Prostate gland (tissue), 2 donors: ENCODE measurements at regions of chr14 and their contacts with region 1.

Region 1: GRCh38 chr14:42994051-42994736 is 1387.5 kb downstream of the LRFN5 start:
- DNase-seq: no peak
- H3K4me3 ChIP-seq: no peak overlapping the region
- H3K27ac ChIP-seq: no peak overlapping the region
- H3K4me1 ChIP-seq: no peaks in the 10 kb centered on the region
- H3K27me3 ChIP-seq: no peaks in the 10 kb centered on the region
- CTCF ChIP-seq: no peak
- POLR2A ChIP-seq: no peak

Region 2: DNA sequence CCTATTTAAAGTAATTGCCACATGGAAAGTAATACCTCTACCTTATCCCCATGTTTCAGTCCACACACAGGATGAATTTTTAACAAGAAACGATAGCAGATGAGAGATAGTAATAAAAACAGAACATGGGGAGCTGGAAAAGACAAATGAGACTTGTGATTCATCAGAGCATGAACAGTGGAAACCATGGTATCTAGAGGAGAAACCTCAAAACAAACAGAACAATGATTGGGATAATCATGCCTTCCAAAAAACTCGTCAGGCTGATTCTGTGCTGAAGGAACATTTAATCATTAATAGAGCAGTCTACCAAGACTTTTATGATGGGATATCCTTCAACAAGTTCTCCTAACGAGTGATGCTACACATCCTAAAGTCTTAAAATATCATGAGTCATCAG is 122.1 kb after region 1 on chr14:
- intact Hi-C with region 1: no loop called
- DNase-seq: no peak
- H3K4me3 ChIP-seq: no peak overlapping the region
- H3K27ac ChIP-seq: no peak overlapping the region
- H3K4me1 ChIP-seq: no peaks in the 10 kb centered on the region
- H3K27me3 ChIP-seq: no peaks in the 10 kb centered on the region
- CTCF ChIP-seq: no peak
- POLR2A ChIP-seq: no peak

Region 3: DNA sequence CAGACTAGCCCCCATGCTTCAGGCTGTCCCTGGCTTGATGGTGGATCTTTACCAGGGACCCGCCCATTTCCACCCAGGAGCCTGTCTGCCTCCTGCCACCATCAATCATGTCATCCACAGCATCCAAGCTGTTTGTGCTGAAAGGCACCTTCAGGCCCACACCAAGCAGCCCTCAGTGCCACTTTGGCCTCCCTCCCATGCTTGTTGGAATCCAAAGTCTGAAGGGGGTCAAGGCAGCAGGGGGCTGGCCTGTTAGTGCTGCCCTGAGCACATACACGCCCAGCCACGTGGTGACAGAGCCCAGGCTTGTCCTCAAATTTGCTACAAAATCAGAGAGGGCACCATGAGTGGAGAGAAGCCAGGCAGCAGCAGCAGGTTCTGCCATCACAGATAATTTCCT is 366.0 kb after region 1 on chr14:
- intact Hi-C with region 1: loop called (anchors 10 kb)
- DNase-seq: no peak
- H3K4me3 ChIP-seq: no peak overlapping the region
- H3K27ac ChIP-seq: no peak overlapping the region
- H3K4me1 ChIP-seq: no peaks in the 10 kb centered on the region
- H3K27me3 ChIP-seq: no peaks in the 10 kb centered on the region
- CTCF ChIP-seq: no peak
- POLR2A ChIP-seq: no peak